ENCODE measurements at regions of chr1 and their contacts with region 1.

Region 1: DNA sequence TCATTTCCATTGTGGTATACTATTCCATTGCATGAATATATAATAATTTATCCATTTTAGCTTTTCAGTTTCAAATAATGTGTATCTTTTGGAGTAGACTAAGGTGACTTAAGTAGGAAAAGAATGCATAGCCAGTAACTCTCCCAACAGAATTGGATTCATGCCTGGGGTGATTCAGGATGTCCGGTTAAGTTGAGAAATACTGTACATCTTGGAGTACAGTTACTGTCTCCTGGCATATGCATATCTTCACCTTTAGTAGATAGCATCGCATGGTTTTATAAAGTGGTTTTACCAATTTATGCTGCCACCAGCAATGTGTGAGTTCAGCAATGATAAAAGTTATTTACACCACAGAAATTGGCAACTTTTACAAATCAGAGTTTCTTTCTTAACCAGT is 18.6 kb upstream of the SLC6A9 start:
- DNase-seq: no peak

Region 2: DNA sequence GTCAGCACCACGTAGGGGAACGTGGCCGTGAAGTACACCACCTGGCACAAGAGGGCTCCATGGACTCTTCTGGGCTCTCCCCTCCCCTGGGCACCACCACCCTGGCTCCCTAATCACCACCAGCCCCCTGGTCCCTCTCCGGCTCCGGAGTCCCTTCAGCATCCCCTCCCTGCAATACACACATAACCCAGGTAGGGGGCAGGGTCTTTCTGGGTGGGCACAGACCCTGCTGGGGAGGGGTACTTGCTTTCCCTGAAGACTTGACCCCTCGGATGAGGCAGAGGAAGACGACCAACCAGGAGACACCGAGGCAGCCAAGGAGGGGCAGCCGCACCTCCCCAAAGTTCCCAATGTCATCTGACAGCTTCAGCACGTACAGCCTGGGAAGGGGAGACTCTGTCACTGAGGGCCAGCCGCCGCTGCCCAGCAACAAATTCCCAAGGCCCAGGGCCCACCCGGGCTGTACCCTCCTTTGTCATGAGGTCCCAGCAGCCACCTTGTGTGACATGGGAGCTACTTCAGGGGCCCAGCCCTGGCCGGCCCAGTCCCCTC is 47.2 kb before region 1 on chr1:
- intact Hi-C with region 1: loop called (anchors 5 kb)
- DNase-seq: no peak

Region 3: DNA sequence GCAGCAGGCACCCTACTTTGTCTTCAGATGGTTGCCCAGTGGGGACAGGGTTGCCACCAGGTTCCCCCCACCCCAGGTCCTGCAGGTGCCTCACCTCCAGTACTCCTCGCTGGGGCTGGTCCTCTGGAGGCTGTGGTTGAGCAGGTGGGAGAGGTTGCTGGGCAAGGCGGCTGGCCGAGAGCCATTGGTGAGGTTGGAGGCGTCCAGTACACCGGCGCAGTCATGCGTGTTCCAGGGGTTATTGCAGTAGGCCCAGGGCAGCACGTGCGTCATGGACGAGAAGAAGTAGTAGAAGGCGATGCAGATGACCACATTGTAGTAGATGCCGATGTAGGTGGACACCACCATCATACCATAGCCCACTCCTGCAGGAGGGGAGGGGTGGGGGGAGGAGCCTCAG is 41.6 kb before region 1 on chr1:
- intact Hi-C with region 1: loop called (anchors 5 kb)
- DNase-seq: no peak